ENCODE measurements at regions of chr18 and their contacts with region 1.

Region 1: DNA sequence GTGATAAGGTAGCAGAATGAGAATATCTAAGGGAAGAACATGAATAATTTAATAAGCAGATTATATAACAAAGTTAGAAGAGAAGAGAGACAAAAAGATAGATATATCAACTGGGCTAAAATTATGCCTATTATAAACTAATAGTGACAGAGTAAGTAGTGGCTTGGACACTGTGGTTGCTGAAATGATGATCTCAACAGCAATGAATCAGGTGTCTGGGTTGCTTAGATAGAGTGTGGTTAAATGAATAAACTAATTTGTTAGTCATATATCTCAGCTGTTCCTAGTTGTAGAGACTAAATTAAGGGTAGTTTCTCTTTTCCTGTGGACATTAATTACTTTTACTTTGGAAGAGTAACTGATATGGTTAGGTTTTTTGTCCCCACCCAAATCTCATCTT is 1485.4 kb upstream of the CELF4 start:
- DNase-seq: no peak

Region 2: DNA sequence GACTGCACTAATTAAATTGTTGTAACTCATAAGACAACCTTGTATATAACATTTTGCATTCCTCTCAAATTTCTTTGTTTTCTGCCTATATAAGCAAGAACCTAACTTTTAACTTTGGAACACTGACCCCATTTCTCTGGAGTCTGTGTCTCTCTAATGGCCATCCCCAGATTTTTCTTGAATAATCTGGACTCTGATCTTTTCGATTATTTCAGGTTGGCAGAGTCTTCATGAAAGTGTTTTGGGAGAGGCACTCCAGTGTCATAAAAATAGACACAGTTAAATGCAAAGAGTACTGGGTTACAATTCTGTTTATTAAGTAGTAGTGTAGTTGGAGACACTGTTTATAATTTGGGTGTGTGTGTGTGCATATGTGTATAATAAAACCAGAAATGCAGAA is 17.7 kb before region 1 on chr18:
- intact Hi-C with region 1: loop called in 1 of 2 experiments (anchors 1 kb)
- DNase-seq: no peak

Measured in posterior vena cava (tissue), 2 donors.